Naive thymus-derived CD4-positive, alpha-beta T cell (primary cell): ENCODE measurements at regions of chr22 and their contacts with region 1.

Region 1: GRCh38 chr22:20916983-20917810 is at the start of gene CRKL:
- DNase-seq: peak; percentile 92 to 96 (median 94)
- ATAC-seq: peak; percentile 98
- H3K4me3 ChIP-seq: peak within 1 kb of the TSS; percentile 87
- H3K4me3 Mint-ChIP-seq: peak within 1 kb of the TSS; percentile 83 to 99 (median 97)
- H3K27ac ChIP-seq: peak within 1 kb of the TSS; percentile 92
- H3K27ac Mint-ChIP-seq: peak within 1 kb of the TSS; percentile 77 to 97 (median 90)
- H3K4me1 ChIP-seq: peaks cover 4 to 12% of the 10 kb centered on the region in 2 donors
- H3K4me1 Mint-ChIP-seq: peaks cover 32 to 50% (median 40%) of the 10 kb centered on the region in 7 donors
- H3K27me3 ChIP-seq: no peaks in the 10 kb centered on the region
- H3K27me3 Mint-ChIP-seq: no peaks in the 10 kb centered on the region
- total RNA-seq, gene CRKL: 38.9 to 82.7 (median 77.8) TPM

Region 2: GRCh38 chr22:20803696-20804324 is 113.4 kb before region 1 on chr22:
- CTCF ChIA-PET with region 1: no interaction called
- POLR2A ChIA-PET with region 1: no interaction called
- intact Hi-C with region 1: loop called in 1 of 2 experiments (anchors 10 kb)
- DNase-seq: peak in 7 of 9 donors; percentile 16 to 33 (median 24)
- ATAC-seq: peak; percentile 42
- H3K4me3 ChIP-seq: no peak overlapping the region
- H3K4me3 Mint-ChIP-seq: no peak overlapping the region
- H3K27ac ChIP-seq: no peak overlapping the region
- H3K27ac Mint-ChIP-seq: peak overlapping the region in 1 of 9 donors; percentile 27
- H3K4me1 ChIP-seq: no peaks in the 10 kb centered on the region
- H3K4me1 Mint-ChIP-seq: no peaks in the 10 kb centered on the region
- H3K27me3 ChIP-seq: no peaks in the 10 kb centered on the region
- H3K27me3 Mint-ChIP-seq: no peaks in the 10 kb centered on the region

Region 3: GRCh38 chr22:20885557-20886323 is 31.5 kb before region 1 on chr22:
- CTCF ChIA-PET with region 1: interaction called, 4 read pairs
- POLR2A ChIA-PET with region 1: no interaction called
- intact Hi-C with region 1: loop called in 1 of 2 experiments (anchors 2 kb)
- DNase-seq: peak in 7 of 9 donors; percentile 2 to 42 (median 14)
- ATAC-seq: peak; percentile 98
- H3K4me3 ChIP-seq: no peak overlapping the region
- H3K4me3 Mint-ChIP-seq: no peak overlapping the region
- H3K27ac ChIP-seq: peak overlapping the region; percentile 0
- H3K27ac Mint-ChIP-seq: peak overlapping the region in 1 of 9 donors; percentile 5
- H3K4me1 ChIP-seq: no peaks in the 10 kb centered on the region
- H3K4me1 Mint-ChIP-seq: peaks cover 0 to 2% (median 0%) of the 10 kb centered on the region in 7 donors
- H3K27me3 ChIP-seq: no peaks in the 10 kb centered on the region
- H3K27me3 Mint-ChIP-seq: no peaks in the 10 kb centered on the region

Region 4: DNA sequence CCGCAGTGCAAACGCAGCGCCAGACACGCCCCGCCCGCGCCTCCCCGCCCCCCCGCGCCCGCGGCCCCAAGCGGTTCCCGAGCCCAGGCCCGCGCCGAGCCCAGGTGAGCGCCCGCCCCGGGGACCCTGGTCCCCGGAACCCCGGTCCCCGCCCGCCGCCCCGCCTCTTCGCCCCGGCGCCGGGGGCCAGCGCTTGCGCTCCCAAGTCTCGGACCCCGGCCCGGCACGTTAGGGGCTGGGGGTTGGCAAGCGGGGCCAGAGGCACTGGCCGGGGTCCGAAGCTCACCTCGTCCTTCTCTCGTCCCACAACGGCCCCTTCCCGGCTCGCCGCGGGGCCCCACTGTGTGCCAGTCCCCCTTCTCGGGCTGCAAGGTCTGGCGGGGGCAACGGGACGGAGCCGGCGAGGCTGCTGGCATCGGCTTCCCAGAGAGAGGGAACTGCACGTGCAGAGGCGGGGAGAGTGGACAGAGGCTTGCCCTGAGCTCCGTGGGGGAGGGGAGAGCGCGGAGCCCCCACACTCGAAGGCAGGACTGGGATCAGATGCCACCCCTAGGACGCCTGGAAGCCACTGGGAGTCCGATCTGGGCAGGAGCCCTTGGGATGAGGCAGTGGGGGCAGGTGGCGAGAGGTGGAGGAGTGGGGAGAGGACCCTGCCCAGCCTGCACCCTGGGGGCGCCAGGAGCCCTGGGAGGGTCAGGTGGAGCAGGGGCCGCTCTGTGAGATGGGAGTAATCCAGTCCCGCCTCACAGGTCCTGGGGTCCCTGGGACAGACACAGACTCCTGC is 48.1 kb after region 1 on chr22:
- CTCF ChIA-PET with region 1: no interaction called
- POLR2A ChIA-PET with region 1: no interaction called
- intact Hi-C with region 1: no loop called
- DNase-seq: no peak
- ATAC-seq: peak; percentile 44
- H3K4me3 ChIP-seq: no peak overlapping the region
- H3K4me3 Mint-ChIP-seq: peak overlapping the region in 8 of 10 donors; percentile 7 to 71 (median 52)
- H3K27ac ChIP-seq: peak overlapping the region; percentile 29
- H3K27ac Mint-ChIP-seq: no peak overlapping the region
- H3K4me1 ChIP-seq: no peaks in the 10 kb centered on the region
- H3K4me1 Mint-ChIP-seq: peaks cover 0 to 17% (median 12%) of the 10 kb centered on the region in 7 donors
- H3K27me3 ChIP-seq: no peaks in the 10 kb centered on the region
- H3K27me3 Mint-ChIP-seq: peaks cover 2 to 31% (median 8%) of the 10 kb centered on the region in 5 donors

Region 5: DNA sequence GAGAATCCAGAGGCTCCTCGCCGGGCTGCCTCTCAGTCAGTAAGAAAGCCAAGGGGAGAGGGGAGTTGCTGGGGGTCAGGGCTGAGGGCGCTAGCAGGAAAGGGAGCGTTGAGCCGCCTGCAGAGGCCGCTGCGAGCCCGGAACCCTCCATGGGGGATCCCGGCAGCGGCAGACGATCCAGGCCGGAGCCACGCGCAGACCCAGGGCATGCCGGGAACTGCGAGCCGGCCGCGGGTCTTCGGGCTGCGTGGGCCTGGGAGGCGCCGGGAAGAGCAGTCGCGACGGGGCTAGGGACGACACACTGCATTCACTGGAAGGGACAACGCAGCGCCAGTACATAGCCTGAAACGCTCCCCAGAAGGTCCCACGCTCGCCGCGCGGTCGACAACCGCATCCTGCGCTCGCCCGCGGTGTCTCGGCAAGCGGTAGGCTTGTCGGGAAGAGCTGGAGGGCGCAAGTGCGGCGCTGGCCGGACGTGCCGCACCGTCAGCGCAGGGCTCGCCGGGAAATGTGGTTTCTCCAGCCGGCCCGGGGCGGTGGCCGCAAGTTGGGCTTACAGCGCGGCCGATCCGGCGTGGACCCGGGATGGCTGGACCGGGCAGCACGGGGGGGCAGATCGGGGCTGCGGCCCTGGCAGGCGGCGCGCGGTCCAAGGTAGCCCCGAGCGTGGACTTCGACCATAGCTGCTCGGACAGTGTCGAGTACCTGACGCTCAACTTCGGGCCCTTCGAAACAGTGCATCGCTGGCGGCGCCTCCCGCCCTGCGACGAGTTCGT is 64.8 kb after region 1 on chr22 and contains the start of gene LZTR1:
- CTCF ChIA-PET with region 1: interaction called, 4 read pairs
- POLR2A ChIA-PET with region 1: no interaction called
- intact Hi-C with region 1: loop called in 1 of 2 experiments (anchors 1 kb)
- DNase-seq: peak; percentile 47 to 80 (median 63)
- ATAC-seq: peak; percentile 86
- H3K4me3 ChIP-seq: peak within 1 kb of the TSS; percentile 80
- H3K4me3 Mint-ChIP-seq: peak within 1 kb of the TSS; percentile 89 to 97 (median 93)
- H3K27ac ChIP-seq: peak within 1 kb of the TSS; percentile 84
- H3K27ac Mint-ChIP-seq: peak within 1 kb of the TSS; percentile 86 to 97 (median 92)
- H3K4me1 ChIP-seq: peaks cover 15 to 32% of the 10 kb centered on the region in 2 donors
- H3K4me1 Mint-ChIP-seq: peaks cover 33 to 50% (median 43%) of the 10 kb centered on the region in 7 donors
- H3K27me3 ChIP-seq: no peaks in the 10 kb centered on the region
- H3K27me3 Mint-ChIP-seq: no peaks in the 10 kb centered on the region
- total RNA-seq, gene LZTR1: 61.8 to 104 (median 74.2) TPM

Region 6: DNA sequence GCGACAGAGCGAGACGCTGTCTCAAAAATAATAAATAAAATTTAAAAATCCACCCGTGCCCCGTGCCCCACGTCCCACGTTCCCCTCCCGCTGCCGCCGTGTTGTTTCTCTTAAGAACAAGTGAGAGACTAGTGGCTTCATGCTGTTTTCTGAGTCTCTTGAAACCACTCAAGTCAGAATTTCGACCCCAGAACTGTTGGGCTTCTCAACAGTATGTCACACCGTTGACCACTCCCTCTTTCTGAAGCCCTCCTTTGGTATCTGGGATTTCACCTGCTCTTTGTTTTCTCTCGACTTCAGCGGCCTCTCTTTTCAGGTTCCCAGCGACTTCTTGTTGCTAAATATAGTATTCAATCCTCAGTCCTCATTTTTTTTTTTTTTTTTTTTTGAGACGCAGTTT is 749.6 kb after region 1 on chr22:
- CTCF ChIA-PET with region 1: no interaction called
- POLR2A ChIA-PET with region 1: no interaction called
- intact Hi-C with region 1: loop called in 1 of 2 experiments (anchors 1 kb)
- DNase-seq: no peak
- ATAC-seq: no peak
- H3K4me3 ChIP-seq: peak overlapping the region; percentile 99
- H3K4me3 Mint-ChIP-seq: peak overlapping the region; percentile 95 to 100 (median 98)
- H3K27ac ChIP-seq: peak overlapping the region; percentile 86
- H3K27ac Mint-ChIP-seq: peak overlapping the region; percentile 79 to 99 (median 97)
- H3K4me1 ChIP-seq: peaks cover 6 to 16% of the 10 kb centered on the region in 2 donors
- H3K4me1 Mint-ChIP-seq: peaks cover 29 to 45% (median 42%) of the 10 kb centered on the region in 7 donors
- H3K27me3 ChIP-seq: no peaks in the 10 kb centered on the region
- H3K27me3 Mint-ChIP-seq: peaks cover 0 to 2% (median 0%) of the 10 kb centered on the region in 5 donors